HEK293 (cell line): ENCODE measurements at regions of chr19 and their contacts with region 1.

Region 1: DNA sequence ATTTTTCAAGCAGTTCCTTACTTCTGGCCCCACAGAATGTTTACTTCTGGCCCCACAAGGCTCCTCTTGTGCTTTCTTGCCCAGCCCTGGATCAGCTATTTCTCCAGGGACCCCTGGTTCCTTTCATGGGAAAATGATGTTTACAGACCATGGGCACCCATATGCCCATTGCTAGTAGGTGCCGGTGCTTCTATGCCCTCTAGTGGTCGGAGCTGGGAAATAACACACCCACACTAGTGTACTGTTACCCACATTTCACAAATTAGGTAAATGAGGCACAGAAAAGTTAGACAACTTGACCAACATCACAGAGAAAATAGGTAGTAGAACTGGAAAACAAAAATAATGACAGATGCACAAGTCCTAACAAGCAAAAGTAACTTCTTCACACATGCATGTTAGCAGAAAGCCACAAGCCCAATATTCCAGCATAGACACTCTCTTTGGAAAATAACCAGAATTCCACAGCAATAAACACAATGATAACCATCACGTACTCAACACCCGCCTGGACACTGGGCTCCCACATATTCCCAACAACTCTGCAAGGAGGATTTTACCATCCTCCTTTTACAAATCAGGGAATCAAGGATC is 1.3 kb upstream of the CEACAM6 start:
- H3K4me3 ChIP-seq: no peak overlapping the region
- H3K27ac ChIP-seq: no peak overlapping the region
- H3K4me1 ChIP-seq: peaks cover 6% of the 10 kb centered on the region; the same call in 1 of the 2 replicates
- CTCF ChIP-seq: peak; percentile 37; the same call in 1 of the 2 replicates

Region 2: DNA sequence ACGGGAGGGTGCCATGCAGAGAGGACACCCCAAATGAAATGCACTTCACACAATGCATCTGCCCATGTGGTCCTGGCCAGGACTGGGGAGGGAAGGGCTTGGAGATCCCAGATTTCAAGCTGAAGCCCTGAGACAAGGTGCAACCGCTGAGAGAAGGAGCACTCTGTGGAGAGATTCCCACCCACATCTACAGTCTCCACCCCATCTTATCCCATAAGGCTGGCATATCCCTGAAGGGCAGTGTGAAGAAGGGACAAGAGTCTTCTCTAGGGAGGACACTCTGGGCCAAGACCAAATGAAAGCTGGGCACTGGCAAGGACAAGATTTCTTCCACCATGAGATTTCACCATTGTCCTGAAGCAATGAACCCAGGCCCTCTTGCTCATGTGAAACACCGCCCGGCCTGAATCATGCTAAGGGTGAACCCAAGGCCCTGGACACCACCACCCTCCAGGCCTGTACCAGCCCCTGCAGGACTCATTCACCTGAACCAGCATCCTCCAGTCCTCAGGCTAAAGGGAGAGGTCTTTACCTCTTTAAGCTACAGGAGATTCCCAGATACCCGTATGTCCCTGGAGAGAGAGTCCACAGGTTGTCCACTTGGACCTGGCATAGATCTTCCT is 147.7 kb before region 1 on chr19:
- CTCF ChIA-PET with region 1: no interaction called
- POLR2A ChIA-PET with region 1: no interaction called
- H3K4me3 ChIP-seq: no peak overlapping the region
- H3K27ac ChIP-seq: no peak overlapping the region
- H3K4me1 ChIP-seq: no peaks in the 10 kb centered on the region
- CTCF ChIP-seq: no peak

Region 3: GRCh38 chr19:41691268-41691970 is 62.6 kb before region 1 on chr19:
- CTCF ChIA-PET with region 1: interaction called, 13 read pairs
- POLR2A ChIA-PET with region 1: no interaction called
- H3K4me3 ChIP-seq: no peak overlapping the region
- H3K27ac ChIP-seq: no peak overlapping the region
- H3K4me1 ChIP-seq: no peaks in the 10 kb centered on the region
- CTCF ChIP-seq: peak; percentile 79

Region 4: GRCh38 chr19:41734617-41735016 is 19.4 kb before region 1 on chr19:
- CTCF ChIA-PET with region 1: interaction called, 49 read pairs
- POLR2A ChIA-PET with region 1: no interaction called
- H3K4me3 ChIP-seq: no peak overlapping the region
- H3K27ac ChIP-seq: no peak overlapping the region
- H3K4me1 ChIP-seq: no peaks in the 10 kb centered on the region
- CTCF ChIP-seq: no peak

Region 5: DNA sequence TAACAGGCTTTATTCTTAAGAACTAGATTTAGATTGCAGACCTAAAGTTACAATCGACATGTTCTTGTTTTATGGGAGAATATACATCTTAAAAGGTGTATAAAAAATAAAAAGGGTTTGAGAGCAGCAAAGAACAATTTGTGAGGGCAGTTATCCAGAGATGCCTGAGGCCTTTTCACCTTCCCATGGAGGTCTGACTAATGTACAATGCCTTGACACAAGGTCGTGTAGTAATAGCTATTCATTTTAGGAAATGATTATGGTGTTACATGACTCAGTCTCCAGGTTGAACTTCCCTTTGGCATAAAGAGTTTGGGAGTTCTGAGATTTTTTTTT is 21.3 kb after region 1 on chr19:
- CTCF ChIA-PET with region 1: interaction called, 149 read pairs
- POLR2A ChIA-PET with region 1: no interaction called
- H3K4me3 ChIP-seq: no peak overlapping the region
- H3K27ac ChIP-seq: no peak overlapping the region
- H3K4me1 ChIP-seq: no peaks in the 10 kb centered on the region
- CTCF ChIP-seq: no peak

Region 6: GRCh38 chr19:41801792-41802211 is 47.8 kb after region 1 on chr19:
- CTCF ChIA-PET with region 1: interaction called, 180 read pairs
- POLR2A ChIA-PET with region 1: no interaction called
- H3K4me3 ChIP-seq: no peak overlapping the region
- H3K27ac ChIP-seq: no peak overlapping the region
- H3K4me1 ChIP-seq: no peaks in the 10 kb centered on the region
- CTCF ChIP-seq: no peak

Region 7: DNA sequence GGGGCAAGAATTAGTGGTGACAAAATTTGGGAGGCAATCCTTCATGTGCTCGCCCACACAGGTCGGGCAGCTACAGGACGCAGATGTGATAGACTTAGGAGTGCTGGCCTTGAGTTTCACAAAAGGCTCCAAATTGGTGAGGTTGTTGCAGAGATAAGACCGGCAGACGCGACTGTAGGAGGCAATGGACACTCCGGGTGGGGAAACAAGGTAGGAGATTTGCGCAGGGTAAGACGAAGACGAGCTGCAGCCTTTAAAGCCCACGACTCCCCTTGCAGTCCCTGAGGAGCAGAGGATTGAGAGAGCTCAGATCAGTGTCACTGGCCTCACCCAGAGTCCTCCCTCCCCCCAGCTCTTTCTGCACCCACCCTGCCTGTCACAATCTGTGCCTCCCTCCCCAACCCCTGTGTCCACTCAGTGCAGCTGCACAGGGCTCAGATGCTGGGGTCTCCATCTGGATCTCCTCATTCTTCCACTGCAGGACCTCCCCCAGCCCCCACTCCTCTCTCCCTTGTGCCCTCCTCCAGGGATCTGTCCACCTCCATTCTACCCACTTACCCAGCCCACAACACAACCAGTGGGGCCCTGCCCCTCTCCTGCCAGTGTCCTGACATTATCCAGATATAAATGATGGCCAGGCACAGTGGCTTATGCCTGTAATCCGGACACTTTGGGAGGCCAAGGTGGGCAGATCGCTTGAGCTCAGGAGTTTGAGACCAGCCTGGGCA is 84.1 kb after region 1 on chr19:
- CTCF ChIA-PET with region 1: interaction called, 44 read pairs
- POLR2A ChIA-PET with region 1: no interaction called
- H3K4me3 ChIP-seq: no peak overlapping the region
- H3K27ac ChIP-seq: no peak overlapping the region
- H3K4me1 ChIP-seq: no peaks in the 10 kb centered on the region
- CTCF ChIP-seq: no peak